ENCODE measurements at regions of chr3 and their contacts with region 1.

Region 1: GRCh38 chr3:27712136-27713077 is 9.7 kb downstream of the EOMES start:
- DNase-seq: peak; percentile 64 to 89 (median 76)
- ATAC-seq: peak; percentile 90 to 91
- H3K4me3 Mint-ChIP-seq: peak overlapping the region; percentile 87 to 100 (median 98)
- H3K27ac Mint-ChIP-seq: peak overlapping the region; percentile 21 to 94 (median 88)
- H3K4me1 Mint-ChIP-seq: peaks cover 18 to 45% (median 36%) of the 10 kb centered on the region in 4 donors
- H3K27me3 Mint-ChIP-seq: peaks cover 9 to 59% (median 34%) of the 10 kb centered on the region in 5 donors

Region 2: GRCh38 chr3:27900316-27900715 is 187.9 kb after region 1 on chr3:
- POLR2A ChIA-PET with region 1: no interaction called
- DNase-seq: peak in 5 of 10 donors; percentile 4 to 63 (median 25)
- ATAC-seq: peak; percentile 64 to 78
- H3K4me3 Mint-ChIP-seq: peak overlapping the region in 9 of 10 donors; percentile 12 to 48 (median 23)
- H3K27ac Mint-ChIP-seq: peak overlapping the region; percentile 10 to 86 (median 80)
- H3K4me1 Mint-ChIP-seq: peaks cover 30 to 68% (median 57%) of the 10 kb centered on the region in 4 donors
- H3K27me3 Mint-ChIP-seq: no peaks in the 10 kb centered on the region

Region 3: GRCh38 chr3:28328188-28329151 is 616.1 kb after region 1 on chr3:
- POLR2A ChIA-PET with region 1: interaction called, 16 read pairs
- DNase-seq: peak in 3 of 10 donors; percentile 53 to 62 (median 60)
- ATAC-seq: peak; percentile 45 to 58
- H3K4me3 Mint-ChIP-seq: no peak overlapping the region
- H3K27ac Mint-ChIP-seq: peak overlapping the region in 3 of 10 donors; percentile 8 to 58 (median 40)
- H3K4me1 Mint-ChIP-seq: peaks cover 0 to 29% (median 3%) of the 10 kb centered on the region in 4 donors
- H3K27me3 Mint-ChIP-seq: no peaks in the 10 kb centered on the region

Region 4: DNA sequence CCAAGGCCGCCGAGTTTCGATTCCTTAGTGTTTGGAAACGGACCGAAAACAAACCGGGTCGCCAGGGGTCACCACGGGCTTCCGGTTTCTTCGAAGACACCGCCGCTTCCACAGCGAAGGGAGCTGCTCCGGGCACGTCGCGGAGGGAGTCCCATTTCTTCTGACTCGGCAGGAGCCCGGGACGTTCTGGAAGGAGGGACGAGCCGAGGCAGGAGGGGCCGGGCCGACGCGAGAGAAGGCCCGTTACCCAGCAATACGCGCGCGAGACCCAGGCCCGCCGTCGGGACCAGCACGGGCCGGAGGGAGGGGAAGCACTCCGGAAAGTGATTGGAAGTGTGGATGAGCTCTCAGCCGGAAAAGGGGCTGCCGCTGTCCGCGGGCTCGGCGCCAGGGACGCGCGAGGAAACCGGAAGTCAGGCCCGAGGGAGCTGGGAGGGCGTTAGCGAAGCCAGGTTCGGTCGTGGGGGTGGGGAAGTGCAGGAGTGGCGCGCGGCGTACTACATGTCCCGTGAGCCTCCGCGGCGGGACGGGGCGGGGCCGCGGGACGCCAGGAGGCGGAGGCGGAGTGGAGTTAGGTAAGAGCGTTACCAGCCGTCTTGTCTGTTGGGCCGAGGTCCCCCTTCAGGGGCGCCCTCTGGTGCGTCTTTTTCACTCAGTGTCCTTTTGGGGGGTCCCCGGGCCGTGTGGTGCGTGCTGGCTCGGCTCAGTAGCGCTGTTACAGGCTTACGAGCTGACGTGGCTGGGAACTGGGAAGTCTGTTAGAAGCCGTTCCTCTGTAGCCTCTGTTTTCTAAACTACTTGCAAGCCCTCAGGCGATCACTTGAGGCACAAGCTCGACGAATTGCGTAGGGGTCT is 636.4 kb after region 1 on chr3 and contains the starts of genes AZI2 and ZCWPW2:
- POLR2A ChIA-PET with region 1: interaction called, 12 read pairs
- DNase-seq: peak; percentile 88 to 95 (median 91)
- ATAC-seq: peak; percentile 83 to 87
- H3K4me3 Mint-ChIP-seq: peak within 1 kb of the TSS; percentile 92 to 99 (median 97)
- H3K27ac Mint-ChIP-seq: peak within 1 kb of the TSS; percentile 97 to 99 (median 99)
- H3K4me1 Mint-ChIP-seq: peaks cover 22 to 62% (median 50%) of the 10 kb centered on the region in 4 donors
- H3K27me3 Mint-ChIP-seq: no peaks in the 10 kb centered on the region
- polyA plus RNA-seq, gene AZI2: 41.3 to 54.0 (median 43.6) TPM
- polyA plus RNA-seq, gene ZCWPW2: 0.51 to 0.69 (median 0.68) TPM

Measured in naive thymus-derived CD8-positive, alpha-beta T cell (primary cell).